Common myeloid progenitor, CD34-positive (primary cell): ENCODE measurements at regions of chr18 and their contacts with region 1.

Region 1: DNA sequence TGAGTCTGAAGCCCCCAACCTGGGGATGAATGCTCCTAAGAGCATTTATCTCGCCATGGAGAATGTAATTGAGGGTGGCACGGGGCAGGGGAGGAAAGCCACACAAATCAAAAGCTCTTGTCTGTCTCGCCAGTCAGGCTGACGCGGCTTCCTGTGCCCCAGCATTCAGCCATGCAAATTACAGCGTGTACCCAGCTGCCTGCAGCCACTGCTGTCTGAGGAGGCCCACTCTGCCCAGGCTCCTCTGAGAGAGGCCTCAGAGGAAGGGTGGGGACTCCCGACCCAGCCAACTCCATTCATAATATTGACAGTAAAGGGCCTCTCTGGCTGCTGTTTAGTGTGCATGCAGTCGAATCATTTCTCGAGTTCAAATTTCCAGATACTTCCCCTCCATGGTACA is 22.0 kb downstream of the SMAD7 start:
- DNase-seq: peak; percentile 68 to 89 (median 83)
- H3K4me3 ChIP-seq: peak overlapping the region in 2 of 7 experiments; percentile 12 to 31
- H3K27ac ChIP-seq: no peak overlapping the region
- H3K4me1 ChIP-seq: peaks cover 18 to 87% (median 69%) of the 10 kb centered on the region in 4 experiments
- H3K27me3 ChIP-seq: peaks cover 0 to 6% (median 0%) of the 10 kb centered on the region in 5 experiments

Region 2: DNA sequence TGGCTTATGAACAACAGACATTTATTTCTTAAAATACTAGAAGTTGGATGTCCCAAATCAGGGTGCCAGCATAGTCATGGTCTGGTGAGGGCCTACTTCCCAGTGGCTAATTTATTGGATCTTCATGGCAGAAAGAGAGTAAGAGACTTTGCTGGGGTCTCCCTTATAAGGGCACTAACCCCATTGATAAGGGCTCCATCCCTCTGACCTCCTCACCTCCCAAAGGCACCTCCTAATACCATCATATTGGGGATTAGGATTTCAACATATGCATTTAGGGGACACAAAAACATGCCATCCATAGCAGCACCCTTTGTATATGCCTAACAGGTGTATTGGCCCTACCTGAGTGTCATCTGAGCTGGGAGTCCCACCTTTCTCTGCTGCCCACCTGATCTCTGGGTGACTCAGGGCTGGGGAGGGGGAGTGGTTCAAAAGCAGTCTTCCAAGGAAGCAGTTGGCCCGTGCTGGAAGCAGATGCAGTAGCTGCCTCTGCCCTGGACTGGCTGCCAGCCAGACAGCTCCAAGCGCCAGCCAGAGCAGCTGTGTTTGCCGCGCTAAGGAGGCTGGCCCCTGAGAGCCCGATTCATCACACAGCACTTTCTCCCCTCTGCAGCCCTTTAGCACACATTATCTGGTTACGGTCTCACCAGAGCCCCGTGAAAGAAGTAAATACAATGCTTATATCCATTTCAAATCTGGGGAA is 62.6 kb before region 1 on chr18:
- CTCF ChIA-PET with region 1: no interaction called
- POLR2A ChIA-PET with region 1: no interaction called
- DNase-seq: peak in 2 of 3 donors; percentile 64 to 77
- H3K4me3 ChIP-seq: no peak overlapping the region
- H3K27ac ChIP-seq: no peak overlapping the region
- H3K4me1 ChIP-seq: peaks cover 2 to 14% (median 4%) of the 10 kb centered on the region in 4 experiments
- H3K27me3 ChIP-seq: no peaks in the 10 kb centered on the region

Region 3: GRCh38 chr18:48940854-48941611 is 12.2 kb after region 1 on chr18:
- CTCF ChIA-PET with region 1: interaction called, 11 read pairs
- POLR2A ChIA-PET with region 1: interaction called, 10 read pairs
- DNase-seq: peak; percentile 91 to 96 (median 92)
- H3K4me3 ChIP-seq: peak overlapping the region in 3 of 7 experiments; percentile 32 to 55 (median 47)
- H3K27ac ChIP-seq: no peak overlapping the region
- H3K4me1 ChIP-seq: peaks cover 7 to 32% (median 28%) of the 10 kb centered on the region in 4 experiments
- H3K27me3 ChIP-seq: peaks cover 0 to 46% (median 13%) of the 10 kb centered on the region in 5 experiments

Region 4: GRCh38 chr18:49135877-49136276 is 207.1 kb after region 1 on chr18:
- CTCF ChIA-PET with region 1: no interaction called
- POLR2A ChIA-PET with region 1: no interaction called
- DNase-seq: peak in 1 of 3 donors; percentile 6
- H3K4me3 ChIP-seq: no peak overlapping the region
- H3K27ac ChIP-seq: no peak overlapping the region
- H3K4me1 ChIP-seq: no peaks in the 10 kb centered on the region
- H3K27me3 ChIP-seq: no peaks in the 10 kb centered on the region